Heart left ventricle (tissue), 16 donors: ENCODE measurements at regions of chr14 and their contacts with region 1.

Region 1: DNA sequence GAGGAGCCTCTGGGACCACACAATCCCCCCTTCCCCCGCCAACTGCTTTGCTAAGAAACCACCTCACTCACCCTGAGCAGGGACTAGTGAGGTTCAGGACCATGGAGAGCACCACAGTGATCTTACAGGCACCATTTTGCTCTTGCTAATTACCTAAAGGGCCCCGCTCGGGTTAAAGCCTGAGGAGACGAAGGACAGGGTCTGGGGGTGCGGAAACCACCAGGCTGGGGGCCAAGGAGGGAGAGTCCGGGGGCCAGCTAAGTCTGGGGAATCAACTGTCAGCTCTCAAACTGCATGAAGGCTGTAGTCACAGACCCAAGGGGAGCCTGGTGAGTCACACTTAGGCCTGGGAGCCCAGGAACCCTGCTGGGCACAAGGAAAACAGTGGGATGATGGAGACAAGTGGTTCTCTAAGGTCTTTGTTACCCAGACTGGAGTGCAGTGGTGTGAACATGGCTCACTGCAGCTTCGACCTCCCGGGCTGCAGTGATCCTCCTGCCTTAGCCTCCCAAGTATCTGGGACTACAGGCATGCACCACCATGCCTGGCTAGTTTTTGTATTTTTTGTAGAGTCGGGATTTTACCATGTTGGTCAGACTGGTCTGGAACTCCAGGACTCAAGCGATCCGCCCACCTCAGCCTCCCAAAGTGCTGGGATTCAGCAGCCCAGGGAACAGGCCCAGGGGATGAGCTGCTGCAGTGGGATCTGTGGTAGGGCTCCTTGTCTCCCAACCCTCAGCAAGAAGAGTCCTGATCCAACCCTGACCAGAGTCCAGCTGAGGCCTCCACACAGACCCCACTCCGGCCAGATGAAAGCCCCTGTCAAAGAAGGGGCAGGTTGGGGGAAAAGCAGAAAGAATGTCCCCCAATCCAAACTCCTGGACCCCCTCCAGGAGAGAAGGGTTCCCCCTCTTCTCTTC is 98.8 kb downstream of the CALM1 start:
- DNase-seq: peak in 4 of 5 donors; percentile 50 to 64 (median 62)
- ATAC-seq: peak in 2 of 4 donors; percentile 19 to 33
- H3K4me3 ChIP-seq: no peak overlapping the region
- H3K27ac ChIP-seq: no peak overlapping the region
- H3K4me1 ChIP-seq: peaks cover 0 to 18% (median 16%) of the 10 kb centered on the region in 12 donors
- H3K27me3 ChIP-seq: no peaks in the 10 kb centered on the region
- CTCF ChIP-seq: no peak
- POLR2A ChIP-seq: no peak

Region 2: GRCh38 chr14:90301668-90302090 is 193.9 kb before region 1 on chr14:
- intact Hi-C with region 1: no loop called
- DNase-seq: no peak
- ATAC-seq: peak; percentile 23 to 70 (median 42)
- H3K4me3 ChIP-seq: no peak overlapping the region
- H3K27ac ChIP-seq: peak overlapping the region in 11 of 12 donors; percentile 11 to 73 (median 42)
- H3K4me1 ChIP-seq: peaks cover 5 to 43% (median 16%) of the 10 kb centered on the region in 12 donors
- H3K27me3 ChIP-seq: no peaks in the 10 kb centered on the region
- CTCF ChIP-seq: peak; percentile 30 to 74 (median 60)
- POLR2A ChIP-seq: no peak

Region 3: DNA sequence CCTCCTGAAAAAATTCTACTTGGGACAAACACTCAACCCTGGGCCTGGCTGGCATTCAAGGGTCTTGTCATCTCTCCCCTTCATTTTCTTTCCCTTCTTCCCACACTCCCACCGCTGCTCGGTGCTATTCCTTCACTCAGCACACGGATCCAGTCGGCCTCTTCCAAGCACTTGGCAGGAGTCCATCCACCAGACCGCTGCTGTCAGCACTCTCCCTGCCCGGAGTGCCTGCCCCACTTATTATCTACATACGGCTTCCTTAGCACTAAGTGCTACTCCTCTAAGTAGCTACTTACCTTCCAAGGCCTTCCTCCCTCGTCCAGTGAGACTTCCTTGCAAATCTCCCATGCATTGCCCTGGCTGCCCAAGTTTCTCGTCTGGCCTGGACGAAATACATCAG is 69.0 kb before region 1 on chr14:
- intact Hi-C with region 1: loop called in 1 of 10 experiments (anchors 10 kb)
- DNase-seq: peak; percentile 48 to 76 (median 61)
- ATAC-seq: peak; percentile 39 to 77 (median 58)
- H3K4me3 ChIP-seq: no peak overlapping the region
- H3K27ac ChIP-seq: peak overlapping the region in 8 of 12 donors; percentile 25 to 86 (median 64)
- H3K4me1 ChIP-seq: peaks cover 0 to 37% (median 16%) of the 10 kb centered on the region in 12 donors
- H3K27me3 ChIP-seq: no peaks in the 10 kb centered on the region
- CTCF ChIP-seq: no peak
- POLR2A ChIP-seq: no peak

Region 4: DNA sequence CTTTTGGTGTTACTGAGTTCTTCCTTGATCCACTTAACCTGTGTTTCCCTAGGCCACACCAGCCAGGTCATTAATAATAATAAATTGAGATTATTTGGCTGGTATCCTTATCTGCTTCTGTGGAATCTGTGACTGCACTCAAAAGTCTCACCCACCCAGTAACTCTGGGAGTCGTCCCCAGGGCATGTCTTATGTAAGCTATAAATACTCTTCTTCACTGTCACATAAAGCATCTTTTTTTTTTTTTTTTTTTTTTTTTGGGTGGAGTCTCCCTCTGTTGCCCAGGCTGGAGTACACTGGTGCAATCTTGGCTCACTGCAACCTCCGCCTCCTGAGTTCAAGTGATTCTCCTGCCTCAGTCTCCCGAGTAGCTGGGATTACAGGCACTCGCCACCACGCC is 417.1 kb after region 1 on chr14:
- intact Hi-C with region 1: no loop called
- DNase-seq: no peak
- ATAC-seq: no peak
- H3K4me3 ChIP-seq: no peak overlapping the region
- H3K27ac ChIP-seq: no peak overlapping the region
- H3K4me1 ChIP-seq: no peaks in the 10 kb centered on the region
- H3K27me3 ChIP-seq: no peaks in the 10 kb centered on the region
- CTCF ChIP-seq: no peak
- POLR2A ChIP-seq: no peak